ENCODE measurements at regions of chr5 and their contacts with region 1.

Region 1: GRCh38 chr5:150560401-150561193 is 52.7 kb downstream of the NDST1 start:
- DNase-seq: peak; percentile 18
- H3K4me3 ChIP-seq: no peak overlapping the region
- H3K27ac ChIP-seq: no peak overlapping the region
- H3K4me1 ChIP-seq: peaks cover 0 to 23% (median 0%) of the 10 kb centered on the region in 3 donors
- H3K27me3 ChIP-seq: no peaks in the 10 kb centered on the region
- CTCF ChIP-seq: peak; percentile 92 to 98 (median 95)
- POLR2A ChIP-seq: no peak

Region 2: GRCh38 chr5:150637245-150638052 is 76.9 kb after region 1 on chr5:
- intact Hi-C with region 1: no loop called
- DNase-seq: no peak
- H3K4me3 ChIP-seq: no peak overlapping the region
- H3K27ac ChIP-seq: peak overlapping the region; percentile 22 to 96 (median 85)
- H3K4me1 ChIP-seq: peaks cover 47 to 86% (median 77%) of the 10 kb centered on the region in 3 donors
- H3K27me3 ChIP-seq: no peaks in the 10 kb centered on the region
- CTCF ChIP-seq: no peak
- POLR2A ChIP-seq: no peak

Region 3: DNA sequence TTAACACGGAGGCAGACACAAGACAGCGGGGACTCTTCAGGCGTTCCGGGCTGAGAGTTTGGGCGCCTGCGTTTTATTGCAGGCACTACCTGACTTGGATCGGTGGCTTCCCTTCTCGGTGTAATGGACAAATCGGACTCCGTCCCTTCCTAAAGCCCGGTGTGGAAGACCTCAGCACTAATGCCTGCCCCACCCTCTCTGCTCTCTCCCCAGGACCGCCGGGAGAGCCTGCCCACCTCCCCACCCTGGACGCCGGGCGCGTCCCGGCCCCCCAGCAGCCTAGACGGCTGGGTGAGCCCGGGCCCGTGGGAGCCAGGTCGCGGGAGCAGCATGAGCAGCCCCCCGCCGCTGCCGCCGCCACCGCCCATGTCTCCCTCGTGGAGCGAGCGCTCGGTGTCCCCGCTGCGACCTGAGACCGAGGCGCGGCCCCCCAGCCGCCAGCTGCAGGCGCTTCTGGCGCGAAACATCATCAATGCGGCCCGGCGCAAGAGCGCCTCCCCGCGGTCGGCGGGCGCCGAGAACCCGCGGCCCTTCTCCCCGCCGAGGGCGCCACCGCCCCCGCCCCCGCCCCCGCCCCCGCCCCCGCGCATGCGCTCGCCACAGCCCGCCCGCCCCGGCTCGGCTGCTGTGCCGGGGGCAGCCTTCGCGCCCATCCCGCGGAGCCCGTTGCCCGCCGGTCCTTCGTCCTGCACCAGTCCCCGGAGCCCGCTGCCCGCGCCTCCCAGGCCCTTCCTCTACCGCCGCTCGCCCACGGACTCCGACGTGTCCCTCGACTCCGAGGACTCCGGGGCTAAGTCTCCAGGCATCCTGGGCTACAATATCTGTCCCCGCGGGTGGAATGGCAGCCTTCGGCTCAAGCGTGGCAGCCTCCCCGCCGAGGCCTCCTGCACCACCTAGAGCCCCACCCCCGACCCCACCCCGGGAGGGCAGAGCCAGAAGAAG is 95.9 kb after region 1 on chr5:
- intact Hi-C with region 1: loop called (anchors 5 kb)
- DNase-seq: no peak
- H3K4me3 ChIP-seq: peak overlapping the region; percentile 48 to 70 (median 53)
- H3K27ac ChIP-seq: peak overlapping the region; percentile 59 to 79 (median 70)
- H3K4me1 ChIP-seq: peaks cover 4 to 58% (median 31%) of the 10 kb centered on the region in 3 donors
- H3K27me3 ChIP-seq: no peaks in the 10 kb centered on the region
- CTCF ChIP-seq: peak; percentile 58 to 78 (median 61)
- POLR2A ChIP-seq: no peak

Region 4: DNA sequence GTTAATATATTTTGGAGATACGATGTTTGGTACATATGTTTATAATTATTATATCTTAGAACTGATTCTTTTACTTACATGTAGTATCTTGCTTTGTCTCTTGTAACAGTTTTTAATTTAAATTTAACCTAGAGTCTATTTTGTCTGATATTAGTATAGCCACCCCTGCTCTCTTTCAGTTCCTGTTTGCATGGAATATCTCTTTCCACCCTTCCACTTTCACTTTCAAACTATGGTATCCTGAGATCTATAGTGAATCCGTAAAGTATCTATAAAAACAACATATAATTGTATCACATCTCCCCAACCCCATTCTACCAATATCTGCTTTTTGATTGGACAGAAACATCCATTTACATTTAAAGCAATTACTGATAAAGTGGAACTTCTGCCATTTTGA is 293.0 kb after region 1 on chr5:
- intact Hi-C with region 1: loop called (anchors 5 kb)
- DNase-seq: no peak
- H3K4me3 ChIP-seq: no peak overlapping the region
- H3K27ac ChIP-seq: no peak overlapping the region
- H3K4me1 ChIP-seq: no peaks in the 10 kb centered on the region
- H3K27me3 ChIP-seq: no peaks in the 10 kb centered on the region
- CTCF ChIP-seq: no peak
- POLR2A ChIP-seq: no peak

Region 5: DNA sequence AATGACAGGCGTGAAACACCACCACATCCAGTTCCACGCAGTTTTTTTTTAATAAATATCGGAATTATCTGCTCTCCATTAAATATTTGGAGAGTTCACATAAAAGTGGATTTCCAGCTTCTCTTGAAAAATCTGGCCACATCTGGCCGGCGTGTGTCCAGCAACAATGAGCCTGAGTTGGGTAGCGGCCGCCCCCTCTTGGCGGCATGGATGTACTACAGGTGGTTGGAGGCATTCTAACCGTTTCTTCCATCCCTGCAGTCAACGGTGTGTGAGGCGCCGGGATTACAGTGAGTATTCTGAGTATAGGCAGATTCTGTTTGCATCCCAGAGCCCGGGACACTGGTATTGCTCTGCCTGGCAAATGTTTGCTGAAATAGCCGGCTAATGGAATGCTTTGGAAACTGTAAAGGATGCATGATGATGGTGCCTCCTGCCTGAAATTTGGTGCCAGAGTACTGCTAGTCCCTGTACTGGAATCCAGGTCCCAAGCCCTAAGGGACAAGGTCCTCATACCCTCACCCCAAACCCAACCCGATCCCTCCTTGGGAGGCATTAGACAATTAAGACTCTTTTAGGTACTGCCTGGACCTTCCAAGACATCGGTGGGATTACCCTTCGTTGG is 678.8 kb after region 1 on chr5:
- intact Hi-C with region 1: no loop called
- DNase-seq: peak; percentile 32
- H3K4me3 ChIP-seq: peak overlapping the region in 1 of 4 donors; percentile 52
- H3K27ac ChIP-seq: peak overlapping the region in 3 of 4 donors; percentile 68 to 79 (median 70)
- H3K4me1 ChIP-seq: peaks cover 0 to 12% (median 10%) of the 10 kb centered on the region in 3 donors
- H3K27me3 ChIP-seq: no peaks in the 10 kb centered on the region
- CTCF ChIP-seq: peak; percentile 35 to 92 (median 67)
- POLR2A ChIP-seq: no peak

Measured in esophagus squamous epithelium (tissue), 5 donors.